ENCODE measurements at regions of chr6 and their contacts with region 1.

Region 1: DNA sequence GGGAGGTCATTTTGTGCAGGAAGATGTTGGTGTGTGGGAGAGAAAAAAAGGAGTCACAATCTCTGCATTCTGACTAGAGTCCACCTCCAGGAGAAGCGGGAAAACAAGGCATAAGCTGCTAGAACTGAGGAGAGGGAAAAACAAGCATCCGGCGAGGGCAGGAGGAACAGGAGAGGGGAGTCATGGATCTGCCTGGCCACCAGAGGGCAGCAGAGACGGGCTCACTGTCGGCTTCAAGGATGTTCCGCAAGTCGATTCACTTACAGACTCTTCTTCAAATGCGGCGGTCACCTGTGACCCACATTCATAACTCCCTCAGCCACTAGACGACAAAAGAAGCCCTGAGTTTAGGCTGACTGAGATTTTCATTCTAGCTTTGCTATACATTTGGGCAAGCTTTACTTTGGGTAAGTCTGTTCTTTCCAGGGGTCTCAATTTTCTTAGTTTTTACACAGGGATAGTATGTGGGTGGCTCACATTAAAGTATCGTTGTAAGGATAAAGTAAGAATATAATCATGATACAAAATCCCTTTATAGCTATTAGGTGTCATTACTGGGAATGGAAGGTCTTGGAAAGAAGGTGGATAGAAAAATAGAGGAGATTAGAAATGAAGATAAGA is 6.6 kb upstream of the BTNL2 start:
- DNase-seq: peak; percentile 88
- ATAC-seq: peak; percentile 81
- H3K4me3 Mint-ChIP-seq: no peak overlapping the region
- H3K27ac Mint-ChIP-seq: no peak overlapping the region
- H3K4me1 Mint-ChIP-seq: peaks cover 10% of the 10 kb centered on the region
- H3K27me3 Mint-ChIP-seq: peaks cover 62% of the 10 kb centered on the region

Region 2: GRCh38 chr6:32397252-32397920 is 16.2 kb before region 1 on chr6:
- CTCF ChIA-PET with region 1: interaction called, 57 read pairs
- DNase-seq: no peak
- ATAC-seq: peak; percentile 67
- H3K4me3 Mint-ChIP-seq: no peak overlapping the region
- H3K27ac Mint-ChIP-seq: peak overlapping the region; percentile 50
- H3K4me1 Mint-ChIP-seq: peaks cover 6% of the 10 kb centered on the region
- H3K27me3 Mint-ChIP-seq: peaks cover 40% of the 10 kb centered on the region

Region 3: DNA sequence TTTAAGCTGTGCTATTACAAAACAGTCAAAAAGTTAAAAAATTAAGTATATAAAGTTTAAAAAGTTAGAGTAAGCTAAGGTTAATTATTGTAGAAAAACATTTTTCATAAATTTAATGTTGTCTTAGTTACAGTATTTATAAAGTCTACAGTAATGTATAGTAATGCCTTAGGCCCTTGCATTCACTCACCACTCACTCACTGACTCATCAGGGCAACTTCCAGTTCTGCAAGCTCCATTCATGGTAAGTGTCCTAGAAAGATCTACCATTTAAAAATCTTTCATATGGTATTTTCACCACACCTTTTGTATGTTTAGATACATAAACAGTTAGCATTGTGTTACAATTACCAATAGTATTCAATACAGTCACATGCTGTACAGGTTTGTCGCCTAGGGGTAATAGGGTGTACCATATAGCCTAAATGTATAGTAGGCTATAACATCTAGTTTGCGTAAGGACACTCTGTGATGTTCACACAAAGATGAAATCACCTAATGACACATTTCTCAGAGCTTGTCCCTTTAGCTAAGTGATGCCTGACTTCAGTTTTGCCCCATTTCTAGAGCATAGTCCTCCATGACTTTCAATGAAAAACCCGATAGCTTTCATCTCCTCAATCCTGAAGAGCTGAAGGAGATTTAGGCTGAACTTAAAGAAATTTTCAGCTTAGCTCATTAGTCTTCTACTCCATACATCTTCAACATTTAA is 11.2 kb after region 1 on chr6:
- CTCF ChIA-PET with region 1: interaction called, 31 read pairs
- DNase-seq: no peak
- ATAC-seq: no peak
- H3K4me3 Mint-ChIP-seq: no peak overlapping the region
- H3K27ac Mint-ChIP-seq: no peak overlapping the region
- H3K4me1 Mint-ChIP-seq: no peaks in the 10 kb centered on the region
- H3K27me3 Mint-ChIP-seq: peaks cover 44% of the 10 kb centered on the region

Region 4: DNA sequence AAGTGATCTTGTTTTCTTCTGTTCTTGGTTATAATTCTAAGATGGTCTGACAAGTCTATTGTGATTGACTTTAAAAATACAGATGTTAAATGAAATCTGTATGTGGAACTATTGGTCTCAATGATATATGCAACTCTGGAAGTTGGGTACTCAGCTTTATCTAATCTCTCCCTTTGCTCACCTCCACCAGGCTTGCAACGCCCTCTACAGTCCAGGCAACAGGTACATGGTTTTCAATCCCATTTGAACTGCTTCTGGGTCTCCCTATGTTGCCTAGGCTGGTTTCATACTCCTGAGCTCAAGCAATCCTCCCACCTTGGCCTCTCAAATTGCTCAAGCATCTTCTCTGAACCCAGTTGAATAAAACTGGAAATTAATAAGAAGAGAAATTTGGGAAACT is 278.5 kb after region 1 on chr6:
- CTCF ChIA-PET with region 1: interaction called, 46 read pairs
- DNase-seq: peak; percentile 85
- ATAC-seq: peak; percentile 90
- H3K4me3 Mint-ChIP-seq: no peak overlapping the region
- H3K27ac Mint-ChIP-seq: no peak overlapping the region
- H3K4me1 Mint-ChIP-seq: peaks cover 18% of the 10 kb centered on the region
- H3K27me3 Mint-ChIP-seq: peaks cover 55% of the 10 kb centered on the region

Region 5: GRCh38 chr6:32700391-32701040 is 287.0 kb after region 1 on chr6:
- CTCF ChIA-PET with region 1: interaction called, 72 read pairs
- DNase-seq: no peak
- ATAC-seq: peak; percentile 70
- H3K4me3 Mint-ChIP-seq: no peak overlapping the region
- H3K27ac Mint-ChIP-seq: no peak overlapping the region
- H3K4me1 Mint-ChIP-seq: peaks cover 5% of the 10 kb centered on the region
- H3K27me3 Mint-ChIP-seq: peaks cover 74% of the 10 kb centered on the region

Region 6: DNA sequence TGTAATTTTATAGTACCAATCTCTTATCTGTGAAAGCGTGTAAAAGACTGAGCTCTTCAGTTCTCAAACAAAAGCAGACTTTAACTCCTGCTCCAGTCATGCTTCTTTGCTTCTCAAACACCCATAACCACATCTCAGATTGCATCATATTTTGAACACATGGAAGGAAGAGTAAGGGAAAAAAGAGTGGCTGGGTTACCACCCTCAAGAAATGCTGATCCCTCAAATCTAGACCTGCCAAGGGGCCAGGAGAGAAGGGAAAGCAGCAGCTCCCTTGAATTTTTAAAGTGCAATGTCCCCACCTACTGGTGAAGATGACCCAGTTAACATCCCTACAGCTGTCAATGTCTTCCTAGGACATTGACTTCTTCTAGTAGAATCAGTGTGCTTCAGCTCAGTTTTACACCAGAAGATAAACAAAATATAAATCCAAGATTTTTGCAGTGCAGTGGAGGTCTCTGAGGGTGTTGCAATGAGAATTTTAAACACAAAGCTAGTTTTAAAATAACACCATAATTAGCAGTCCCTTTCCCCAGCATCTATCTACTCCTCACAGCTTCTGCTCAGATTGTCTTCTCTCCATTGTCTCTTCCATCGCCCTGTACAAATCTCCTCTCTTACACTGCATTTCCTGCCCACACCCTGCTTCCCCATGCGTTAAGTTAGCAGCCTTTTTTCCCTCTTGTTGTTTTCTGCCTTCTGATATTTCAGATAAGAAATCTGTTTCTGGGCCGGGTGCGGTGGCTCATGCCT is 372.4 kb after region 1 on chr6:
- CTCF ChIA-PET with region 1: interaction called, 49 read pairs
- DNase-seq: no peak
- ATAC-seq: peak; percentile 78
- H3K4me3 Mint-ChIP-seq: no peak overlapping the region
- H3K27ac Mint-ChIP-seq: no peak overlapping the region
- H3K4me1 Mint-ChIP-seq: peaks cover 2% of the 10 kb centered on the region
- H3K27me3 Mint-ChIP-seq: peaks cover 74% of the 10 kb centered on the region

Region 7: DNA sequence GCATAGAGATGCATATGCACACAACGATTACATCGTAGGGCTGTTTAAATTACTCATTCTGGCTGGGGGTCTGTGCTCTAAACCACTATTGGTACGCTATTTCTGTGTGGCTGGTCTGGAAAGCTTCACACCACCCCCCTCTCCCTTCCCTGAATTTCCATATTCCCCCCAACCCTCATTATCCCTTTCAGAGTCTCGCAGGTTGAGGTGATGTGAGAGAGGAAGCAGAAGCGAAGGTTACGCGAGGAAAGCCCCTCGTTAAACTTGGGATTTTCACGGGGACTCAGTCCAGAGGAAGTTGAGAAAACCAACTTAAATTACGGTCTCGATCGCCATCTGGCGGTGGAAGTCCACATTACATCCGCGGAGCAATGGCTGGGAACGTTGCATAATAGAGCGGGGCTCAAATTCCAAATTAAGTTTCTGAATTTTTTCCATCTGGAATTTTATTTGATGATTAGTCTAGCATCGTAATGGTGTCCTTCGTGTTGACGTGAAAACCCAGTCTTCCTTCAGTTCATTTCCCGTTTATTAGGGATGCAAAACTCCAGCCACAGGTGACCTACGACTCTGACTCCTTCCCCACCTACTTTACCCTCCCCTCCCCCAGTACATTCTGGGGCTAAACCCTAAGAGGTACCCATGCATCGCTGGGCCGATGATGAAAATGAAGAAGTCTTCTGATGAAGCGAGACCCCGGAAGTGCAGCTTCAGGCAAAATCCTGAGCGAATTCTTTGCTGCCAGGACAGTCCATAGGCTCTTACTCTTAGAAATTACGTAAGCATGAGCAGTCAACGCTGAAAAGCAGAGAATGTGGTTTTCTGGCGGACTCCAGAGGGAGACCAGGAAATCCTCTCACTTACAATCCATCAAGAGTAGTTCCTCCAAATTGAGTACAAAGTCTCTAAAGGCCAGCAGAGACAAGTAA is 383.6 kb after region 1 on chr6:
- CTCF ChIA-PET with region 1: interaction called, 23 read pairs
- DNase-seq: peak; percentile 83
- ATAC-seq: peak; percentile 77
- H3K4me3 Mint-ChIP-seq: peak overlapping the region; percentile 61
- H3K27ac Mint-ChIP-seq: no peak overlapping the region
- H3K4me1 Mint-ChIP-seq: peaks cover 29% of the 10 kb centered on the region
- H3K27me3 Mint-ChIP-seq: peaks cover 81% of the 10 kb centered on the region

Measured in activated CD8-positive, alpha-beta memory T cell treated with anti-CD3 and anti-CD28 coated beads, Interleukin-2, amount 10 ng/mL, durations not matched to agents 7 days and 5 days (primary cell).